Activated B cell treated with CpG ODN at 0.5 μM for 24 hours (primary cell): ENCODE measurements at regions of chr3 and their contacts with region 1.

Region 1: GRCh38 chr3:125374996-125375941 is at the start of gene ZNF148:
- DNase-seq: peak; percentile 92
- ATAC-seq: peak; percentile 92
- H3K4me3 Mint-ChIP-seq: peak within 1 kb of the TSS; percentile 96
- H3K27ac Mint-ChIP-seq: peak within 1 kb of the TSS; percentile 92
- H3K4me1 Mint-ChIP-seq: peaks cover 39% of the 10 kb centered on the region
- H3K27me3 Mint-ChIP-seq: no peaks in the 10 kb centered on the region
- CTCF ChIP-seq: no peak
- total RNA-seq, gene ZNF148: 46.6 and 57.6 TPM in 2 replicates

Region 2: DNA sequence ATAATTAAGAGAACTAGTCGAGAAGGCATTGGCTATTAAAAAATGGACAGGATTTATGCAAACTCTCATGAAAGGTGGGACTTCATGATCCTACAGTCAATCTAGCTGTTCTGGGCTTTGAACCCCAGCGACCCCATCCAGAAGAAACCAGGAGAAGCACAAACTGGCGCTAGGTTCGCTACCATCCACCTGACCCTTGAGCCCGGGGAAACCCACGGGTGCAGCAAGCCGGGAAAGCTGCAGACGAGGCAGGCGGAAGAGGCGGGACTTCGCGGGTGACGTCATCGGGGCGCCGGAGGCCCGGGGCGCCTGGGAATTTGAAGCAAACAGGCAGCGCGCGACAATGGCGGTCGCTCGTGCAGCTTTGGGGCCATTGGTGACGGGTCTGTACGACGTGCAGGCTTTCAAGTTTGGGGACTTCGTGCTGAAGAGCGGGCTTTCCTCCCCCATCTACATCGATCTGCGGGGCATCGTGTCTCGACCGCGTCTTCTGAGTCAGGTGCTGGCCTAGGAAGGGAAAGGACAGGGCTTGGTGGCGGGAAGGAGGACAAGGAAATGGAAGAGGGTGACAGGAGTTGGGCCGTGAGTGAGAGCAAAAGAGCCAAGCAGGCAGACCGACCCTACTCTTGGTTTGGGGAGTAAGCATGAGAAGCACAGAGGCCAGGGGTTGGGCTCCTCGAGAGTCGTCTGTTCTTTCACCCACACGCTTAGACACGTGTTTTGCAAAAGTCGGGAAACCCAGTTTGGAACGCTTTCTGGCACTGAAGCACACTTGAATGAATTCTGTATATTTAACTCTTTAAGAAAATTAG is 644.9 kb before region 1 on chr3 and contains the start of gene UMPS:
- CTCF ChIA-PET with region 1: no interaction called
- POLR2A ChIA-PET with region 1: no interaction called
- intact Hi-C with region 1: loop called (anchors 10 kb)
- DNase-seq: peak; percentile 88
- ATAC-seq: peak; percentile 98
- H3K4me3 Mint-ChIP-seq: peak within 1 kb of the TSS; percentile 100
- H3K27ac Mint-ChIP-seq: peak within 1 kb of the TSS; percentile 96
- H3K4me1 Mint-ChIP-seq: peaks cover 29% of the 10 kb centered on the region
- H3K27me3 Mint-ChIP-seq: peaks cover 12% of the 10 kb centered on the region
- CTCF ChIP-seq: no peak
- total RNA-seq, gene UMPS: 27.1 and 31.6 TPM in 2 replicates

Region 3: DNA sequence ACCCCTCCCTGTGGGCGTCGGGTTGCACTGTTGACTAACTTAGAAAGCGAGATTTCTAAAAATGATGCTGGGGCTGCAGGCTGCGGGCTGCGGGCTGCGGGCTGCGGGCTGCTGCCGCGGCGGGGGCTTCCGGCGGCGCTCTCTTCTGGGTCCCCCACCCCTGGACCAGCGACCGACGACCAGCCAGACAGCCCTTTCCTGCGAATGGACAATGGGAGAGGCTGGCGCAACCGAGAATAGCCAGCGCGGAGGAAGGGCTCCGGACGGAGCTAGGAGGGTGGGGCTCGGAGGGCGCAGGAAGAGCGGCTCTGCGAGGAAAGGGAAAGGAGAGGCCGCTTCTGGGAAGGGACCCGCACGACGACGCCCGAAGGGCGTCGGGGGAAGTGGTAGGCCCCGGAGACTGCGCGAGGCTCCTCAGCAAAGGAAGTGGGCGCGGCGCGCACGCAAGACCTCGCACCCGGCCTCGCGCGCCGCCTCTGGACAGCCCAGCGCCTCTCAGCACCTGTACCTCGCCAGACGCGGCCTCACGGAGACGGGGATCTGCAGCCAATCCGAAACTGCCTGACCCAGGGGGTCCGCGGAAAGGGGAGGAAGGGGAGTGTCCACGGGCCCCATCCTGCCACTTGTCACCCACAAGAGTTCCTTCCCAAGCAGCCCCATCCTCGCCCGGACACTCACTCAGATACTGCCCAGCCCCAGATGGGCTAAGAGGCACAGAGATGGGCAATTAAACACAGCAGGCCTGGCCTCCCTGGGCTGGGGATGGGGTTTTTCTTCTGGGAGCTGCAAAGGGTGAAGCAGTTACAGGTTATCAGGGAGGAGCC is 233.5 kb before region 1 on chr3:
- CTCF ChIA-PET with region 1: no interaction called
- POLR2A ChIA-PET with region 1: interaction called, 3 read pairs
- intact Hi-C with region 1: loop called (anchors 10 kb)
- DNase-seq: peak; percentile 44
- ATAC-seq: peak; percentile 88
- H3K4me3 Mint-ChIP-seq: peak overlapping the region; percentile 82
- H3K27ac Mint-ChIP-seq: peak overlapping the region; percentile 79
- H3K4me1 Mint-ChIP-seq: peaks cover 66% of the 10 kb centered on the region
- H3K27me3 Mint-ChIP-seq: no peaks in the 10 kb centered on the region
- CTCF ChIP-seq: no peak

Region 4: GRCh38 chr3:125357032-125357658 is 18.1 kb before region 1 on chr3:
- CTCF ChIA-PET with region 1: no interaction called
- POLR2A ChIA-PET with region 1: interaction called, 25 read pairs
- intact Hi-C with region 1: loop called (anchors 1 kb)
- DNase-seq: peak; percentile 54
- ATAC-seq: peak; percentile 96
- H3K4me3 Mint-ChIP-seq: peak overlapping the region; percentile 86
- H3K27ac Mint-ChIP-seq: peak overlapping the region; percentile 61
- H3K4me1 Mint-ChIP-seq: peaks cover 71% of the 10 kb centered on the region
- H3K27me3 Mint-ChIP-seq: no peaks in the 10 kb centered on the region
- CTCF ChIP-seq: no peak

Region 5: DNA sequence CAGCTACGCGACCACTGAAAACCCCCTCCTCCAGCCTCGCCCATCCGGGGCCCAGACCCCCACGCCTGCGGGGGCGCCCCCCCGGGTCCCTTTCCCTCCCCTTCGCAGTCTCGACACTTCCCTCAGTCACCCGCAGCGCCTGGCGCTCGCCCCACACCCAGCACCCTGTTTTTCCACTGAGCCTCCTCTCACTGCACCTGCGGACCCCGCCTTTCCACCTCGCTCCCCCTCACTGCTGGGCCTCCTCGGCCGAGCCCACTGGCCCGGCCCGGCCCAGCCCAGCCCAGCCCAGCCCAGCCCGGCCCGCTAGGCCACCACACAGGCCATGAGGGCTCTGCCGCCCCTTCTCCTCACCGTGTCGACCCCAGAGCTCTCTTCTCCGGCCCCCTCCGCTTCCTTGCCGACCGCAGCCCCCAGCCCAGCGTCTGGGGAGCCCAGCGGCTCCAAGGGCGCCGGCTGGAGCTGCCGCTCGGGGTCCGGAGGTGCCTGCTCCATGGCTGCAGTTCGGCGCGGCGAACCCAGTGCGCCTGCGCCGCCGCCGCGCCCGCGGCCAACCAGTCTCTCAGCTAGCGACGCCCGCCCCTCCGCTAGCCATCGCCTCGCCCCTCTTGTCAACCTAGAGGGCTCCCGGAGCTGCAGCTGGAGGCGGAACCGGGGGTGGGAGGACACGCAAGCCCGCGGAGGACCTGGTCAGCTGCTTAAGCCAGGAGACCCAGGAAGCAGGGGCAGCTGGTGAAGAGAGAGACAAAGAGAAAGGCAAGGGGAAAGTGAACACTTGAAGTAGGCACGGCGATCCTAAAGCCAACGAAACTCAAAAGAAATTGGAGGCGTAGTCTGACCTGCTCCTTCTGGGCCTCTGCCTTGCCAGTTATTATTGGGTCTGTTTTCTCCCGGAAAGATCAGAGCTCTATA is 144.7 kb after region 1 on chr3 and contains the start of gene SNX4:
- CTCF ChIA-PET with region 1: no interaction called
- POLR2A ChIA-PET with region 1: interaction called, 3 read pairs
- intact Hi-C with region 1: loop called (anchors 1 kb)
- DNase-seq: peak; percentile 79
- ATAC-seq: peak; percentile 97
- H3K4me3 Mint-ChIP-seq: peak within 1 kb of the TSS; percentile 98
- H3K27ac Mint-ChIP-seq: peak within 1 kb of the TSS; percentile 92
- H3K4me1 Mint-ChIP-seq: peaks cover 39% of the 10 kb centered on the region
- H3K27me3 Mint-ChIP-seq: no peaks in the 10 kb centered on the region
- CTCF ChIP-seq: no peak
- total RNA-seq, gene SNX4: 28.2 and 30.2 TPM in 2 replicates

Region 6: GRCh38 chr3:126752303-126752842 is 1377.1 kb after region 1 on chr3:
- CTCF ChIA-PET with region 1: no interaction called
- POLR2A ChIA-PET with region 1: no interaction called
- intact Hi-C with region 1: no loop called
- DNase-seq: peak; percentile 69
- ATAC-seq: peak; percentile 95
- H3K4me3 Mint-ChIP-seq: no peak overlapping the region
- H3K27ac Mint-ChIP-seq: no peak overlapping the region
- H3K4me1 Mint-ChIP-seq: peaks cover 3% of the 10 kb centered on the region
- H3K27me3 Mint-ChIP-seq: no peaks in the 10 kb centered on the region
- CTCF ChIP-seq: peak; percentile 37